A673 (cell line): ENCODE measurements at regions of chr19 and their contacts with region 1.

Region 1: DNA sequence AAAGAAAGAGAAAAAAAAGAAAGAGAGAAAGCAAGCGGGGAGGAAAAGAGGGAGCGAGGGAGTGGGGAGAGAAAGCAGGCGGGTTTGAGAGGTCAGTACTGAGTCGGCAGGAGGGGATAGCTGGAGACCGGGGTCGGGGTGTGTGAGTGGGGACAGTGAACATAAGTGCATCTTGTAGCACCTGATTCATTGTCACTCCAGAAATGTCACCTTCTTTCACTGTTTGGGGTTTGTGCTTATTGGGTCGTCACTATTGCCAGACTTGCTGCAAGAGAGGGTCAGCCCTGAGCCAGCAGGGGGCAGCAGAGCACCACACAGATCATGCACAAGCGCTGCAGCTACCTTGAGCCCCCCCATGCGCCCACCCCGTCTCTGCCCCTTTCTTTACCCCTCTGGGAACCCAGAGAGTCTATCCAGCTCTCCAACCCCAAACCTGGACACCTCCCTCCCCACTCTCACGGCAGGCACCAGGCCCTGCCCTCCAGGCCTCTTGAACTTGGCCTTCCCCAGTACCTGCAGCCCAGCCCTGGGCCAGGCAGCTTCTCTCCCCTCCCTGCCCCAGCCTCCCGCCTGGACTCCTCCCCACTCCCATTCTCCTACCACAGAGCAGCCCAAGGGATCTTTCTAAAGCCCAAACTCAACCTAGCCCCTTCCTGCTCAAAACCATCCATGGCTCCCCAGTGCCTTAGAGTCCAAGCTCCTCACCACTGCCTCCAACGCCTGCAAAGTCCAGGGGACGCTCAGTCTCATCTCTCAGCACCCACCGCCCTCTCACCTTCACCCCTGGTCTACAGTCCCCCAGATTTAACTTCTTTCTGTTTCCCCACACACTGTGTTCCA is 9.7 kb upstream of the CEACAM16 start:
- DNase-seq: peak; percentile 76
- H3K4me3 ChIP-seq: peak overlapping the region; percentile 11
- H3K27ac ChIP-seq: no peak overlapping the region
- H3K4me1 ChIP-seq: no peaks in the 10 kb centered on the region
- H3K27me3 ChIP-seq: no peaks in the 10 kb centered on the region
- CTCF ChIP-seq: peak; percentile 92

Region 2: DNA sequence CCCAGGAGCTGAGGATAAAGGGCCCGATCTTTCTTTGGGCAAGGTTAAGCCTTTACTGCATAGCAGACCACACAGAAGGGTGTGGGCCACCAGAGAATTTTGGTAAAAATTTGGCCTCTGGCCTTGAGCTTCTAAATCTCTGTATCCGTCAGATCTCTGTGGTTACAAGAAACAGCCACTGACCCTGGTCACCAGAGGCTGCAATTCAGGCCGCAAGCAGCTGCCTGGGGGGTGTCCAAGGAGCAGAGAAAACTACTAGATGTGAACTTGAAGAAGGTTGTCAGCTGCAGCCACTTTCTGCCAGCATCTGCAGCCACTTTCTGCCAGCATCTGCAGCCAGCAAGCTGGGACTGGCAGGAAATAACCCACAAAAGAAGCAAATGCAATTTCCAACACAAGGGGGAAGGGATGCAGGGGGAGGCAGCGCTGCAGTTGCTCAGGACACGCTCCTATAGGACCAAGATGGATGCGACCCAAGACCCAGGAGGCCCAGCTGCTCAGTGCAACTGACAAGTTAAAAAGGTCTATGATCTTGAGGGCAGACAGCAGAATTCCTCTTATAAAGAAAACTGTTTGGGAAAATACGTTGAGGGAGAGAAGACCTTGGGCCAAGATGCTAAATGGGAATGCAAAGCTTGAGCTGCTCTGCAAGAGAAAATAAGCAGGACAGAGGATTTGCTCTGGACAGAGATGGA is 26.4 kb before region 1 on chr19:
- CTCF ChIA-PET with region 1: no interaction called
- POLR2A ChIA-PET with region 1: no interaction called
- intact Hi-C with region 1: no loop called
- DNase-seq: no peak
- H3K4me3 ChIP-seq: no peak overlapping the region
- H3K27ac ChIP-seq: no peak overlapping the region
- H3K4me1 ChIP-seq: no peaks in the 10 kb centered on the region
- H3K27me3 ChIP-seq: no peaks in the 10 kb centered on the region
- CTCF ChIP-seq: no peak

Region 3: GRCh38 chr19:44723952-44724319 is 34.7 kb after region 1 on chr19:
- CTCF ChIA-PET with region 1: interaction called, 12 read pairs
- POLR2A ChIA-PET with region 1: interaction called, 6 read pairs
- intact Hi-C with region 1: no loop called
- DNase-seq: peak; percentile 81
- H3K4me3 ChIP-seq: no peak overlapping the region
- H3K27ac ChIP-seq: no peak overlapping the region
- H3K4me1 ChIP-seq: no peaks in the 10 kb centered on the region
- H3K27me3 ChIP-seq: no peaks in the 10 kb centered on the region
- CTCF ChIP-seq: peak; percentile 95

Region 4: DNA sequence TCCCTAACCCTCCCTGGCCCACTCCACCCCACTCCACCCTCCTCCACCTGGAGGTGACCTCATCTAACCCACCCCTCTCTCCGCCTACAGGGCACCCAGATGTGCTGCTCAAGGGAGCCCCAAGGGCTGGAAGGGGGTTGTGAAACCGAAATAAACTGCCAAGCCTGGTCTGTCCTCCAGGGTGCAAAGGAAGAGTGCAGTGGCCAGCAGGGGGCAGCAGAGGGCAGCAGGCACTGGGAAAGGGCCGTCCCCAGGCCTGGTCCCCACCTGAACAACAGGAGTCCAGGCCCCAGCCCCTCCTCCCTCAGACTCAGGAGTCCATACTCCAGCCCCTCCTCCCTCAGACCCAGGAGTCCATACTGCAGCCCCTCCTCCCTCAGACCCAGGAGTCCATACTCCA is 111.2 kb after region 1 on chr19:
- CTCF ChIA-PET with region 1: no interaction called
- POLR2A ChIA-PET with region 1: no interaction called
- intact Hi-C with region 1: no loop called
- DNase-seq: peak; percentile 87
- H3K4me3 ChIP-seq: no peak overlapping the region
- H3K27ac ChIP-seq: no peak overlapping the region
- H3K4me1 ChIP-seq: peaks cover 4% of the 10 kb centered on the region
- H3K27me3 ChIP-seq: no peaks in the 10 kb centered on the region
- CTCF ChIP-seq: peak; percentile 92